Prostate gland (tissue), 2 donors: ENCODE measurements at regions of chr1 and their contacts with region 1.

Region 1: GRCh38 chr1:71196685-71197084 is 115.8 kb upstream of the ZRANB2 start:
- DNase-seq: no peak
- H3K4me3 ChIP-seq: no peak overlapping the region
- H3K27ac ChIP-seq: no peak overlapping the region
- H3K4me1 ChIP-seq: no peaks in the 10 kb centered on the region
- H3K27me3 ChIP-seq: no peaks in the 10 kb centered on the region
- CTCF ChIP-seq: peak in 3 of 4 experiments; percentile 36 to 43 (median 41)
- POLR2A ChIP-seq: no peak

Region 2: DNA sequence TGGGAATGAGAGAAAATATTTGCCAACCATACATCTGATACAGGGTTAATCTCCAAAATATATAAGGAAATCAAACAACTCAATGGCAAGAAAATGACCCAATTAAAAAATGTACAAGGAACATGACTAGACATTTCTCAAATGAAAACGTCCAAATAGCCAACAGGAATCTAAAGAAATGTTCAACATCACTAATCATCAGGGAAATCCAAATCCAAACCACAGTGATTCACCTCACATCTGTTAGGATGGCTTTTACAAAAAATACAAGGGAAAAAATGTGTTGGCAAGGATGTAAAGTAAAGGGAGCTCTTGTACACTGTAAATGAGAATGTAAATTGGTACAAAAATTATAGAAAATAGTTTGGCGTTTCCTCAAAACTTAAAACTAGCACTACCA is 61.1 kb before region 1 on chr1:
- intact Hi-C with region 1: no loop called
- DNase-seq: no peak
- H3K4me3 ChIP-seq: no peak overlapping the region
- H3K27ac ChIP-seq: no peak overlapping the region
- H3K4me1 ChIP-seq: no peaks in the 10 kb centered on the region
- H3K27me3 ChIP-seq: no peaks in the 10 kb centered on the region
- CTCF ChIP-seq: no peak
- POLR2A ChIP-seq: no peak

Region 3: GRCh38 chr1:71521655-71522264 is 325.1 kb after region 1 on chr1:
- intact Hi-C with region 1: loop called (anchors 10 kb)
- DNase-seq: peak; percentile 21
- H3K4me3 ChIP-seq: no peak overlapping the region
- H3K27ac ChIP-seq: no peak overlapping the region
- H3K4me1 ChIP-seq: no peaks in the 10 kb centered on the region
- H3K27me3 ChIP-seq: no peaks in the 10 kb centered on the region
- CTCF ChIP-seq: peak in 3 of 4 experiments; percentile 55 to 65 (median 55)
- POLR2A ChIP-seq: no peak

Region 4: GRCh38 chr1:71561729-71562128 is 365.0 kb after region 1 on chr1:
- intact Hi-C with region 1: no loop called
- DNase-seq: no peak
- H3K4me3 ChIP-seq: no peak overlapping the region
- H3K27ac ChIP-seq: no peak overlapping the region
- H3K4me1 ChIP-seq: no peaks in the 10 kb centered on the region
- H3K27me3 ChIP-seq: no peaks in the 10 kb centered on the region
- CTCF ChIP-seq: no peak
- POLR2A ChIP-seq: no peak